ENCODE measurements at regions of chr14 and their contacts with region 1.

Region 1: DNA sequence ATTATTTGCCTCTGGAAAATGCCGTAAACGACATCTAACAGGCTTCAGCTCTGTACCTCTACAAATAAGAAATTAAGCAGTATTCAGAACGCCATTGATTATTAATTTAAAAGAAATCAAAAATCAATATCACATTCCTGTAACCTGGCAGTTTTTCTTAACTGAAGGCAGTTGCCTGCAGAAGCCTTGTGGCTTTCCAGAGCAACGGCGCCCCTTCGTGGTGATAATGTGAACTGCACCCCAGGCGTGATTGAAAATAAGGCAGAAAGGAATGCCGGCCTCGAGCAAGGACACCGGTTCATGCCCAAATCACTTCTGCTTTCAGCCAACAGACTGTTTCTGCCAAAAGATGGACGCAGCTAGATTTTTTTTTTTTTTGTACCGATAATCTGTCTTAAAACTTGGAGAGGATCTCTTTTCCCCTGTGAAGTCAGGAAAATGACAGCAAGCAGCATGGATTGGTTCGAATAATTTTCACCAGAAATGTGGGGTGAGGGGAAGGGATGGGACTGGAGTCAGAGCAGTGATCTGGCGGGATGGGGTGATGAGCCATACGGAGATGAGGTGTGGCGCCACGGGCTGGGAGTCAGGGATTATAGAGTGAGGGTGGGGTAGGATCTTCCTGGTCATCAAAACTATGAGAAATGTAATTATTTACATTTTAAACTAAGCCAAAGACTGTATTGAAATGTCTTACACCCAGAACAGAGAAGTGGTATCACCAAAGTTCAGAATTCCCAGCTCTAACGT is 473.0 kb downstream of the DPF3 start:
- DNase-seq: peak; percentile 91
- ATAC-seq: peak; percentile 68
- H3K4me3 Mint-ChIP-seq: no peak overlapping the region
- H3K27ac Mint-ChIP-seq: no peak overlapping the region
- H3K4me1 Mint-ChIP-seq: peaks cover 4% of the 10 kb centered on the region
- H3K27me3 Mint-ChIP-seq: peaks cover 23% of the 10 kb centered on the region
- CTCF ChIP-seq: peak; percentile 99

Region 2: DNA sequence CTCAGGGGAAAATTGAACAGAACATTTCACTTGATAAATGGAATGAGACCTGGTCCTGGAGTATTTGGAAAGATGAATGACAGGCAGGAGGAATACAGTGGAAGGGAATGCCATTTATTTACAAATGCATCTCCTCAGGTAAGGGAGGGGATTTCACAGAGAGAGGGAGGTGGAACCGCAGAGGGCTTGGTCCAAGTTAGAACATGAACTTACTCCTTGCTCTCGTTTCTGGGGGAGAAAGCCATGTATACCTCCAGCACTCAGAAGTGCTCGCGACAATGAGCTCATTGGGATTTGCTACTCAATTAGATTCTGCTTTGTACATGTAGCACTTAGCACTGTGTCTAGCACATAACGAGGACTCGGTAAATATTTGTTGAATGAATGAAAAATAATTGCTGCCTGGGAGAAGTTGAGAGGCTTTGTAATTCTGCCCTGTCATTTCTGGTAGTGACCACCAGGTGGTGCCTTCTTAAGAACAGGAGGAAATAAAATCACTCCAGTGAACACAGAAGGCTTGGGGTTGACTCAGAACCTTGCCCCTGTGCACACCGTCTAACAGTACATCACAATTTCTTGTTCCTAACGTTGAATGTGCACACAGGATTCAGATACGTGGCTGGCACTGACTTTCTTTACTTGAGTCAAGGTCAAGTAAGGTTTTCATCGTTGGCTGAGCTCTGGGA is 397.0 kb before region 1 on chr14:
- CTCF ChIA-PET with region 1: interaction called, 9 read pairs
- POLR2A ChIA-PET with region 1: no interaction called
- intact Hi-C with region 1: loop called (anchors 5 kb)
- DNase-seq: peak; percentile 65
- ATAC-seq: peak; percentile 94
- H3K4me3 Mint-ChIP-seq: no peak overlapping the region
- H3K27ac Mint-ChIP-seq: no peak overlapping the region
- H3K4me1 Mint-ChIP-seq: peaks cover 5% of the 10 kb centered on the region
- H3K27me3 Mint-ChIP-seq: peaks cover 18% of the 10 kb centered on the region
- CTCF ChIP-seq: peak; percentile 70

Region 3: GRCh38 chr14:72408020-72408419 is 12.9 kb before region 1 on chr14:
- CTCF ChIA-PET with region 1: interaction called, 10 read pairs
- POLR2A ChIA-PET with region 1: no interaction called
- intact Hi-C with region 1: no loop called
- DNase-seq: no peak
- ATAC-seq: no peak
- H3K4me3 Mint-ChIP-seq: no peak overlapping the region
- H3K27ac Mint-ChIP-seq: no peak overlapping the region
- H3K4me1 Mint-ChIP-seq: no peaks in the 10 kb centered on the region
- H3K27me3 Mint-ChIP-seq: peaks cover 19% of the 10 kb centered on the region
- CTCF ChIP-seq: no peak

Region 4: DNA sequence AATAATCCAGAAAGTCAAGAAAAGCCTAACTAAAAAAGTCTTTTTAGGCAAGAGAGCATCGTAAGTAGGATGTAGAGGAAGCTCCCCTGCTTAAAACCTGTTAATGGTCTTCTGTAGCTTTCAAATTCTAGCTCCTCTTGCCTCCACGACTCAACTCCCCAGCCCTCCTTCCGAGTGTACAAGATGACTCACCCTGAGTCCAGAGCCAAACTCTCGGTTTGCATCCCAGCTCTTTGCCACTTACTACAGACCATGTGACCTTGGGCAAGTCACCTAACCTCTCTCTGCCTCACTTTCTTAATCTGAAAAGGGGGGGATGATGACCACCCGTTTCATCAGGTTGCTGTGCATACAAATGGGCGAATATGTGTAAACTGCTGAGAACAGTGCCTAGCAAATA is 12.6 kb after region 1 on chr14:
- CTCF ChIA-PET with region 1: interaction called, 12 read pairs
- POLR2A ChIA-PET with region 1: no interaction called
- intact Hi-C with region 1: no loop called
- DNase-seq: no peak
- ATAC-seq: no peak
- H3K4me3 Mint-ChIP-seq: no peak overlapping the region
- H3K27ac Mint-ChIP-seq: no peak overlapping the region
- H3K4me1 Mint-ChIP-seq: no peaks in the 10 kb centered on the region
- H3K27me3 Mint-ChIP-seq: peaks cover 11% of the 10 kb centered on the region
- CTCF ChIP-seq: no peak

Region 5: DNA sequence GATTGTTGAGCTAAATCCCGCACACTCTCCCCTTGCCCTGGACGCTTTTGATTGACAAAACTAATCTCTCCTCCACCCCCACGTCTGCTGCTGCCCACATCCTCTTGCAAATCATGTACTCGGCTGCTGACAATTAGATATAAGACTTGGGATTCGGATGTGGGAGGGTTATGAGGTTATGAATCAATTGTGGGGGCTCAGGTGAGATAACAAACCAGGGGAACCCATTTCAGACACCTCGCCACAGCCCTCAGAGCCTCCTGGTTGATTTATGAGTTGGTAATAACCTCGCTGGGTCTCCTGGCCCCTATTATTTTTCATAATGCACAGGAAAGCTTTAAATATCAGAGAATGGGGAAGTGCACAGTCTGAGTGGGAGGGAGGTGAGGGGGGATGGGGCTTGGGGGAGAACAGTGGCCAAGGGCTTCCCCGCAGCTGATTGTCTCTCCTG is 23.1 kb after region 1 on chr14:
- CTCF ChIA-PET with region 1: interaction called, 12 read pairs
- POLR2A ChIA-PET with region 1: interaction called, 5 read pairs
- intact Hi-C with region 1: no loop called
- DNase-seq: peak; percentile 86
- ATAC-seq: peak; percentile 82
- H3K4me3 Mint-ChIP-seq: no peak overlapping the region
- H3K27ac Mint-ChIP-seq: peak overlapping the region; percentile 49
- H3K4me1 Mint-ChIP-seq: peaks cover 41% of the 10 kb centered on the region
- H3K27me3 Mint-ChIP-seq: peaks cover 10% of the 10 kb centered on the region
- CTCF ChIP-seq: no peak

Measured in activated CD8-positive, alpha-beta T cell treated with anti-CD3 and anti-CD28 coated beads for 36 hours (primary cell).